ENCODE measurements at regions of chr16 and their contacts with region 1.

Region 1: GRCh38 chr16:68379472-68380349 is 68.6 kb downstream of the SMPD3 start:
- DNase-seq: no peak
- H3K4me3 ChIP-seq: no peak overlapping the region
- H3K27ac ChIP-seq: no peak overlapping the region
- H3K4me1 ChIP-seq: no peaks in the 10 kb centered on the region
- H3K27me3 ChIP-seq: no peaks in the 10 kb centered on the region
- CTCF ChIP-seq: no peak
- EP300 ChIP-seq: no peak
- POLR2A ChIP-seq: no peak

Region 2: GRCh38 chr16:68356249-68356918 is 23.3 kb before region 1 on chr16:
- intact Hi-C with region 1: loop called in 1 of 4 experiments (anchors 1 kb)
- DNase-seq: no peak
- H3K4me3 ChIP-seq: no peak overlapping the region
- H3K27ac ChIP-seq: no peak overlapping the region
- H3K4me1 ChIP-seq: peaks cover 2% of the 10 kb centered on the region
- H3K27me3 ChIP-seq: no peaks in the 10 kb centered on the region
- CTCF ChIP-seq: no peak
- EP300 ChIP-seq: no peak
- POLR2A ChIP-seq: no peak